Activated T-helper 1 cell treated with anti-CD3 and anti-CD28 coated beads, Interleukin-12 subunit alpha, Interleukin-12 subunit beta, Interleukin-2, Interleukin-4 antibody, amounts not matched to agents 30 ng/mL and 10 ng/mL and 1 ng/mL, durations not matched to agents 14 hours and 24 hours and 36 hours (primary cell): ENCODE measurements at regions of chr1 and their contacts with region 1.

Region 1: DNA sequence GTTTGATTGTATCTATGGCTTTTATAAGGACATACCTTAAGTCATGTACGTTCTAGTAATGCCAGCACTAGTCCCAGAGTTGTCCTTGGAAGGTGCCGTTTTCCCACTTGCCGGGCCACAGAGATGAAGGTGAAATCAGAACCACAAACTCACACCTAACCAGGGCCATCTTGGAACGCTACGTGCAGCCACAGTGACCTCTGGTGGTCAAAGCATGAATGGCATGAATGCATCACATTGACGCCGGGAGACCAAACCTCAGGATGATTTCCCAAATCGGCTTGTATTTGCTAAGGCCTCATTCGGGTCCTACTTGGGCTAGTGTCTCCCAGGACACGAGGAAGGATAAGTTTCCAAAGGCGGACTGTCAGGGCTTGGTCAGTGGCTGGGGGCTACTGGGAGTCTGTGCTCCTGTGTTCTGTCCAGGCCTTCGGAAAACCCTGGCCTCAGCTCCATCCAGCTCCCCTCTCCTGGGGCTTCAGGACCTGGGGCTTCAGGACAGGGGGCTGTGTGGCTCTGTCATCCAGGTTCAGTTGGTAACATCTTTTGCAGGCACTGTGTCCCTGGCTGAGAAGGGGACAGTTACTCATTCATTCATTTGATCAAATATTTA is 260.5 kb downstream of the PRDM2 start:
- DNase-seq: peak; percentile 33
- H3K4me3 Mint-ChIP-seq: no peak overlapping the region
- H3K27ac Mint-ChIP-seq: no peak overlapping the region
- H3K4me1 Mint-ChIP-seq: no peaks in the 10 kb centered on the region
- H3K27me3 Mint-ChIP-seq: peaks cover 5% of the 10 kb centered on the region

Region 2: DNA sequence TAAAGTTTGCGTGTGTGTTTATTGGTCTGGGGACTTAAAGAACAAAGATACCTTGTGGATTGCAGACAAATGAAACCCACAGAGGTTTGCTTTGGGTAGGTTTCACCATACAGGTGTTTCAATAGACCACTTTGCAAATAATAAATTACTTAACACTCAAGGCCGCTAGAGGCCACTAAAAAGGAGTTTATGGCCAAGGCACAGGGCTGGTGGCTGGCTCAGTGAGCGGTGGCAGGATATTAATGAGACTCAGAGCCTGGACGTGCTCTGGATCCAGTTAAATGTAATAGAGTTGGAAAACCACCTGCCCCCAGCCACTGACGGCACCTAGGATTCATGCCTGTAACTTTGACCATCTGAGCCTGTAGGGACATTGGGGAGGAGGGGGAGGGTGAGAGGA is 491.1 kb before region 1 on chr1:
- intact Hi-C with region 1: no loop called
- DNase-seq: no peak
- H3K4me3 Mint-ChIP-seq: no peak overlapping the region
- H3K27ac Mint-ChIP-seq: no peak overlapping the region
- H3K4me1 Mint-ChIP-seq: no peaks in the 10 kb centered on the region
- H3K27me3 Mint-ChIP-seq: no peaks in the 10 kb centered on the region

Region 3: GRCh38 chr1:13517193-13517812 is 443.2 kb before region 1 on chr1:
- intact Hi-C with region 1: loop called (anchors 5 kb)
- DNase-seq: no peak
- H3K4me3 Mint-ChIP-seq: no peak overlapping the region
- H3K27ac Mint-ChIP-seq: no peak overlapping the region
- H3K4me1 Mint-ChIP-seq: no peaks in the 10 kb centered on the region
- H3K27me3 Mint-ChIP-seq: peaks cover 19% of the 10 kb centered on the region

Region 4: GRCh38 chr1:13662493-13662892 is 298.0 kb before region 1 on chr1:
- intact Hi-C with region 1: loop called (anchors 1 kb)
- DNase-seq: no peak
- H3K4me3 Mint-ChIP-seq: no peak overlapping the region
- H3K27ac Mint-ChIP-seq: no peak overlapping the region
- H3K4me1 Mint-ChIP-seq: peaks cover 6% of the 10 kb centered on the region
- H3K27me3 Mint-ChIP-seq: peaks cover 3% of the 10 kb centered on the region

Region 5: DNA sequence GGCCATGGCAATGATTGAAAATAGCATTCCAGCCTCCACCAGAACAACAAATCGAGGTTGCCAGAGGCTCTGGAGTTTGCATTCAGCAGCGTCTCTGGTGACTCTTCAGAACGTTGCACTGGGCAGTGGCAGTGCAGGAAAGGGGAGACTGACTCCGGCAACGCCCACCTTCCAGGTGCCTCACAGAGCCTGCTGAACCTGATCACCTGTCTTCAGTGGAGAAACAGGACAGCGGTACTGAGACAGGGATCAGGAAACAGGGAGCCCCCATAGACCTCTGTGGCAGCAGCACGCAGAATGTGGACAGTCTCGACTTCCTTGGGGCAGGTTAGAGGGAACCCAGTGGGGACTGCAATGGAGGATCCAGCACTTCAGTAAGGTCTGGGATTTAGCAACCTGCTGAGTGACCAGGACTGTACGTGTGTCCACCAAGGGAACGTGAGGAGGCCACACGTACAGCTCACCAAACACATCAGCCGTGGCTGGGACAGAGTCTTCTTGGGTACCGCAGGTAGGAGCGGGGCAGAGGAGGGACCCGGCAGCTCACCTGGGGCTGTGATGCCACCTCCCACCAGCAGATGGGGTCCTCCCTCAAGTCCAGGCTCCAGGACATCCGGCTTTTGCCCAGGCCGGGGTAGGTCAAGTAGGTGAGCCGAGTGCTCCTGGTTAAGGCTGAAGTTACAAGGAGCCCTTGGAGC is 131.9 kb before region 1 on chr1:
- intact Hi-C with region 1: loop called (anchors 2 kb)
- DNase-seq: no peak
- H3K4me3 Mint-ChIP-seq: no peak overlapping the region
- H3K27ac Mint-ChIP-seq: no peak overlapping the region
- H3K4me1 Mint-ChIP-seq: no peaks in the 10 kb centered on the region
- H3K27me3 Mint-ChIP-seq: peaks cover 4% of the 10 kb centered on the region